Gastrocnemius medialis (tissue), 4 donors: ENCODE measurements at regions of chr3 and their contacts with region 1.

Region 1: DNA sequence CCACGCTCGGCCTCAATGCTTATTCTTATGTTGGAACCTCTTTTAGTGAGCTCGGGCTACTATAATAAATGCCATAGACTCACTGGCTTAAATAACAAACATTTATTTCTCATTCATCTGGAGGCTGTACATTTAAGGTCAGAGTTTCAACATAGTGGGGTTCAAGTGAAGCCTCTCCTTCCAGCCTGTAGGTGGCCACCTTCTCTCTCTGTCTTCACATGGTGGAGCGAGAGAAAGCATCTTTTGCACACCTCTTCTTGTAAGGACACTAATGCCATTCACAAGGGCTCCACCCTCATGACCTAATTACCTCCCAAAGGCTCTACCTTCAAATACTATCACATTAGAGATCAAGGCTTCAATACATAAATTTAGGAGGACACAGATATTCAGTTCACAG is 520.3 kb upstream of the EPHA6 start:
- DNase-seq: no peak
- ATAC-seq: no peak
- H3K4me3 ChIP-seq: no peak overlapping the region
- H3K27ac ChIP-seq: no peak overlapping the region
- H3K4me1 ChIP-seq: no peaks in the 10 kb centered on the region
- H3K27me3 ChIP-seq: no peaks in the 10 kb centered on the region
- CTCF ChIP-seq: no peak
- POLR2A ChIP-seq: no peak

Region 2: GRCh38 chr3:95883801-95884200 is 410.3 kb before region 1 on chr3:
- in situ Hi-C with region 1: no loop called
- intact Hi-C with region 1: no loop called
- DNase-seq: no peak
- ATAC-seq: no peak
- H3K4me3 ChIP-seq: no peak overlapping the region
- H3K27ac ChIP-seq: no peak overlapping the region
- H3K4me1 ChIP-seq: no peaks in the 10 kb centered on the region
- H3K27me3 ChIP-seq: no peaks in the 10 kb centered on the region
- CTCF ChIP-seq: no peak
- POLR2A ChIP-seq: no peak

Region 3: GRCh38 chr3:96370637-96371036 is 76.5 kb after region 1 on chr3:
- in situ Hi-C with region 1: loop called in 1 of 4 experiments (anchors 25 kb)
- intact Hi-C with region 1: no loop called
- DNase-seq: no peak
- ATAC-seq: no peak
- H3K4me3 ChIP-seq: no peak overlapping the region
- H3K27ac ChIP-seq: no peak overlapping the region
- H3K4me1 ChIP-seq: no peaks in the 10 kb centered on the region
- H3K27me3 ChIP-seq: no peaks in the 10 kb centered on the region
- CTCF ChIP-seq: no peak
- POLR2A ChIP-seq: no peak